Caco-2 (cell line): ENCODE measurements at regions of chr3 and their contacts with region 1.

Region 1: GRCh38 chr3:100316641-100317069 is 17.9 kb upstream of the NIT2 start:
- DNase-seq: peak; percentile 39 to 59
- H3K4me3 ChIP-seq: no peak overlapping the region
- H3K4me3 Mint-ChIP-seq: no peak overlapping the region
- H3K27ac Mint-ChIP-seq: no peak overlapping the region
- H3K4me1 ChIP-seq: no peaks in the 10 kb centered on the region
- H3K4me1 Mint-ChIP-seq: no peaks in the 10 kb centered on the region
- H3K27me3 ChIP-seq: no peaks in the 10 kb centered on the region
- H3K27me3 Mint-ChIP-seq: no peaks in the 10 kb centered on the region
- CTCF ChIP-seq: peak; percentile 59 to 64

Region 2: GRCh38 chr3:99833617-99834205 is 482.9 kb before region 1 on chr3:
- CTCF ChIA-PET with region 1: interaction called, 9 read pairs
- POLR2A ChIA-PET with region 1: interaction called, 3 read pairs
- intact Hi-C with region 1: loop called (anchors 5 kb)
- DNase-seq: no peak
- H3K4me3 ChIP-seq: no peak overlapping the region
- H3K4me3 Mint-ChIP-seq: no peak overlapping the region
- H3K27ac Mint-ChIP-seq: no peak overlapping the region
- H3K4me1 ChIP-seq: no peaks in the 10 kb centered on the region
- H3K4me1 Mint-ChIP-seq: peaks cover 16% of the 10 kb centered on the region
- H3K27me3 ChIP-seq: no peaks in the 10 kb centered on the region
- H3K27me3 Mint-ChIP-seq: no peaks in the 10 kb centered on the region
- CTCF ChIP-seq: no peak

Region 3: DNA sequence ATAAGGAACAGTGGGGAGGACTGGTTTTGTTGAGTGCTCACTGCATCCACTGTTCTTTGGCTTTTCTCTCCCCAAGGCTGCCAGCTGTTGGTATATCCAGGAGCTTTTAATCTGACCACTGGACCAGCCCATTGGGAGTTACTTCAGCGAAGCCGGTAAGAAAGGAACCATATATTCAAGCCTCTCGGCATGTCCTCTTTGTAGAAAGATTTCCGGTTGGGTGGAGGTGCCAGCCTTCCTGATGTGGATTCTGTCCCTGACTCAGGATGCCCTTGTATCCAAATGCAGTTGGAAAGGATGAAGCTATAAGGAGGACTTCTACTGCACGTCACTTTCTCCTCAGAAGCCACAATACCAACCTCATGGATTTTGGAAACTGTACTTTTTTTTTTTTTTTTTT is 32.1 kb after region 1 on chr3:
- CTCF ChIA-PET with region 1: no interaction called
- POLR2A ChIA-PET with region 1: no interaction called
- intact Hi-C with region 1: no loop called
- DNase-seq: no peak
- H3K4me3 ChIP-seq: no peak overlapping the region
- H3K4me3 Mint-ChIP-seq: no peak overlapping the region
- H3K27ac Mint-ChIP-seq: no peak overlapping the region
- H3K4me1 ChIP-seq: no peaks in the 10 kb centered on the region
- H3K4me1 Mint-ChIP-seq: no peaks in the 10 kb centered on the region
- H3K27me3 ChIP-seq: no peaks in the 10 kb centered on the region
- H3K27me3 Mint-ChIP-seq: no peaks in the 10 kb centered on the region
- CTCF ChIP-seq: no peak

Region 4: GRCh38 chr3:100634493-100635272 is 318.0 kb after region 1 on chr3:
- CTCF ChIA-PET with region 1: no interaction called
- POLR2A ChIA-PET with region 1: no interaction called
- intact Hi-C with region 1: loop called (anchors 1 kb)
- DNase-seq: peak; percentile 80 to 84
- H3K4me3 ChIP-seq: 0 out of 2 replicates have a peak overlapping the region, but pooled peaks have one; percentile 2
- H3K4me3 Mint-ChIP-seq: peak overlapping the region; percentile 69
- H3K27ac Mint-ChIP-seq: peak overlapping the region; percentile 63
- H3K4me1 ChIP-seq: peaks cover 35% of the 10 kb centered on the region
- H3K4me1 Mint-ChIP-seq: peaks cover 12% of the 10 kb centered on the region
- H3K27me3 ChIP-seq: no peaks in the 10 kb centered on the region
- H3K27me3 Mint-ChIP-seq: no peaks in the 10 kb centered on the region
- CTCF ChIP-seq: no peak

Region 5: DNA sequence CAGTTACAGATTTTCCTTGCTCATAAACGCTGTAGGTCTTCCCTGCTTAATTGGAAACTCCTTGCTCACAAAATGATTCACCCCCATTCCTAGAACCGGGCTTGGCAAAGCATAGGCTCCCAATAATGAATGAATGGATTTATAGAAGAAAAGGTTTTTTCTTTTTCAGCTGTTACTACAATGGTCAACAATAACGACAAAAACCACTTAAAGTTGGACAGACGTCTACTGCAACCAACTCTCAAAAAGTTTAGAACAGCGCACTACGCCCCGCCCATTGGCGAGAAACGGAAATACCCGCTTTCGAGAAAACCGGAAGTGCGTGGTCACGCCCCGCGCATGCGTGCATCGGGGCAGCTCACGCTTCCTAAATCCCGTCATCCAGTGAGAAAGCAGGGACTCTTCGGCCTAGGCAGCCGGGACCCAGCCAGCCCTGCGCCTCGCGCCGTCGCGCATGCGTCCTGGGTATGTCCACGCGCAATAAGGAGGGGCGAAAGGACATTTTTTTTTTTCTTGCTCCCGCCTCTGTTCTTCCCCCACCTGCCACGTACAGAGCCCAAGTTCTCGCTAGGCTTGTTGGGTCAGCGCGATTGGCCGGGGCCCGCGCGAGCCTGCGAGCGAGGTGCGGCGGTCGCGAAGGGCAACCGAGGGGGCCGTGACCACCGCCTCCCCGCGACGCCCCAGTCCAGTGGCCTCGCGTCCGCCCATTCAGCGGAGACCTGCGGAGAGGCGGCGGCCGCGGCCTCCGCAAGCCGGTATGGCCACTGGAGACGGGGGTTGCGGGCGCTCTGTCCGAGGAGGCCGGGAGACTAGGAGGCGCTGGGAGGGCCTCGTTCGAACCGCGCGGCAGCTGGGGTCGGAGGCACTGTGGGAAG is 392.5 kb after region 1 on chr3 and contains the start of gene TFG:
- CTCF ChIA-PET with region 1: no interaction called
- POLR2A ChIA-PET with region 1: no interaction called
- intact Hi-C with region 1: loop called (anchors 5 kb)
- DNase-seq: peak; percentile 98
- H3K4me3 ChIP-seq: peak within 1 kb of the TSS; percentile 88
- H3K4me3 Mint-ChIP-seq: peak within 1 kb of the TSS; percentile 80
- H3K27ac Mint-ChIP-seq: peak within 1 kb of the TSS; percentile 98
- H3K4me1 ChIP-seq: peaks cover 21% of the 10 kb centered on the region
- H3K4me1 Mint-ChIP-seq: peaks cover 31% of the 10 kb centered on the region
- H3K27me3 ChIP-seq: no peaks in the 10 kb centered on the region
- H3K27me3 Mint-ChIP-seq: peaks cover 4% of the 10 kb centered on the region
- CTCF ChIP-seq: no peak
- total RNA-seq, gene TFG: 128 and 138 TPM in 2 replicates